SK-N-SH (cell line): ENCODE measurements at regions of chr1 and their contacts with region 1.

Region 1: GRCh38 chr1:211632631-211633523 is 42.5 kb downstream of the NEK2 start:
- DNase-seq: no peak
- H3K4me3 ChIP-seq: no peak overlapping the region
- H3K27ac ChIP-seq: peak overlapping the region in 1 of 2 experiments; percentile 63; a peak in 3 of 4 replicates
- H3K4me1 ChIP-seq: peaks cover 15 to 19% of the 10 kb centered on the region in 2 experiments; a peak in 3 of 4 replicates
- H3K27me3 ChIP-seq: no peaks in the 10 kb centered on the region
- CTCF ChIP-seq: no peak
- EP300 ChIP-seq: no peak
- RAD21 ChIP-seq: no peak

Region 2: DNA sequence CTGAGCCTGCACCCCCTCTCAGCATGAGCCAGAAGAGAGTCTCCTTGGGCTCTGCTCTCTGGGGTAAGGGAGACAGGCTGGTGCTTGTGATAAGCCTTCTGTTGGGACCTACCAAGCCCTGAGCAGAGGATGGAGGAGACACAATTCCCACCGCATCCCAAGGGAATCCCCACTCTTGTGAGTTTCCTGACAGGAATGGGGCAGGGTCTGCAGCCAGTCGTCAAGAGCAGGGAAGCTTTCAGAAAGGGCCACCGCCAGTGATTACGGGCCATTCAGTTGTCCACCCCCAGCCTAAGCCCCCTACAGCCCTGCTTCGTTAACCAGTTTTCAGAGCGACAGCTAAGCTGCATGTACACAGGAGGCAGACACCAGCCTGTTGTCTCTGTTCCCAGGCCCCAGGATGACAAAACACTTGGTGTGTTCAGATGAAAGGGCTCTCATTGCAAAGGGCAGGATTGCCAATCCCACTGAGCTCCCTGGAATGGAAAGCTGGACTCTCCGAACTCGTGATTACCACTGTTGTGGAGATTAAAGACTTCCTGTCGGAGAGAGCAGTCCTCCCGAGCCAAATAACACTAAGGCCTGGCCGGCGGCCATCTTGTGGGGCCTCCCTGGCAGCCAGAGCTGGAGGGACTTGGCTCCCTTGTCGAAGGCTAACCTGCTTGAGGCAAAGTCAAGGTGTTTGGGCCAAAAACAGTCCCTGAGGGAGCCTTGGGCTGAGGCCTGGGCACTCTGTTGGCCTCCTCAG is 16.5 kb before region 1 on chr1:
- CTCF ChIA-PET with region 1: no interaction called
- POLR2A ChIA-PET with region 1: no interaction called
- DNase-seq: no peak
- H3K4me3 ChIP-seq: no peak overlapping the region
- H3K27ac ChIP-seq: no peak overlapping the region
- H3K4me1 ChIP-seq: peaks cover 0 to 14% of the 10 kb centered on the region in 2 experiments; a peak in 1 of 4 replicates
- H3K27me3 ChIP-seq: no peaks in the 10 kb centered on the region
- CTCF ChIP-seq: no peak
- EP300 ChIP-seq: no peak
- RAD21 ChIP-seq: no peak

Region 3: GRCh38 chr1:211643324-211644212 is 10.7 kb after region 1 on chr1:
- CTCF ChIA-PET with region 1: interaction called, 21 read pairs
- POLR2A ChIA-PET with region 1: no interaction called
- DNase-seq: peak; percentile 78
- H3K4me3 ChIP-seq: no peak overlapping the region
- H3K27ac ChIP-seq: peak overlapping the region; percentile 36 to 47; a peak in 3 of 4 replicates
- H3K4me1 ChIP-seq: peaks cover 13 to 19% of the 10 kb centered on the region in 2 experiments; a peak in 3 of 4 replicates
- H3K27me3 ChIP-seq: no peaks in the 10 kb centered on the region
- CTCF ChIP-seq: no peak
- EP300 ChIP-seq: no peak
- RAD21 ChIP-seq: no peak

Region 4: GRCh38 chr1:211698161-211699026 is 65.5 kb after region 1 on chr1:
- CTCF ChIA-PET with region 1: no interaction called
- POLR2A ChIA-PET with region 1: no interaction called
- DNase-seq: peak; percentile 86
- H3K4me3 ChIP-seq: no peak overlapping the region; a peak in 1 of 4 replicates
- H3K27ac ChIP-seq: no peak overlapping the region
- H3K4me1 ChIP-seq: no peaks in the 10 kb centered on the region
- H3K27me3 ChIP-seq: no peaks in the 10 kb centered on the region
- CTCF ChIP-seq: peak; percentile 95
- EP300 ChIP-seq: no peak
- RAD21 ChIP-seq: peak; percentile 89